Uterus (tissue), 4 donors: ENCODE measurements at regions of chr2 and their contacts with region 1.

Region 1: DNA sequence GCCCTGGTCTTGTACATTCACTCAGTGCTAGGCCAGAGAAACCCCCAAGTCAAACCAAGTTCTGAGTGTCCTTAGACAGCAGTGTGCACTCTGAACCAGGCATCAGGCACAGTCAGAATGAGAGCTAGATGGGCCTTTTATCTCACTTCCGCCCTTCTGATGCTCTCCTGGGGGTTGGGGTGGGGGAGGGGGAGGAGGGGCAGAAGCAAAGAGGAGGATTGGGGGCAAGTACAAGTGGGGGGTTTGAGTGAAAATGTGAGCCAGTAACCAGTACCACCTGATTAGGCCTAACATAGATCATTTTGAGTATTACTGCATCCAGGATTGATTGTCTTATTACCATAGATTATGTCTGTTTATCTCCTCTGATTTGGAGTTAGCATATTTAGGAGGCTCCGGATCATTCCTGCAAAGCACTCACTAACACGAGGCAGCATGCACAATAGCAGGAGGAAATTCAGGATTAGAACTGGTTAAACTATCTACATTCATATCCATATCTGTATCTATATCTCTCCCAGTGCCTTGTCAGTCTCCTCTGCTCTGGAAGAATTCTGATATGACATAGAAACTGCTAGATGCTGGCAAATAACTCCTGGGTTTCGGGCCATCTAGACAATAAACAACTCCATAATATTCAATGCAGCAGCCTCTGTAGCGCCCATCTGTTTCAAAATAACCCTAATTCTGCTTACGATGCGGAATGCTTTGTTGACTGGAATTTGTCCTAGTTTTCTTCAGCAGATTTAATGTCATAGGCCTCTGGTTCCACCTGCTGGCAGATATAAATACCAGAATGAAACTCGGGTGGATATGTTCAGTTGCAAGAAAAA is 149.1 kb downstream of the RHBDD1 start:
- DNase-seq: peak; percentile 44 to 72
- H3K4me3 ChIP-seq: no peak overlapping the region
- H3K27ac ChIP-seq: peak overlapping the region; percentile 60 to 80
- H3K4me1 ChIP-seq: peaks cover 0 to 10% of the 10 kb centered on the region in 2 donors
- H3K27me3 ChIP-seq: no peaks in the 10 kb centered on the region
- CTCF ChIP-seq: peak; percentile 73 to 90 (median 76)
- POLR2A ChIP-seq: no peak

Region 2: GRCh38 chr2:225670111-225670974 is 1314.6 kb before region 1 on chr2:
- intact Hi-C with region 1: loop called (anchors 10 kb)
- DNase-seq: no peak
- H3K4me3 ChIP-seq: no peak overlapping the region
- H3K27ac ChIP-seq: peak overlapping the region in 1 of 2 donors; percentile 39
- H3K4me1 ChIP-seq: no peaks in the 10 kb centered on the region
- H3K27me3 ChIP-seq: no peaks in the 10 kb centered on the region
- CTCF ChIP-seq: peak; percentile 27 to 54 (median 43)
- POLR2A ChIP-seq: no peak

Region 3: GRCh38 chr2:226813148-226813701 is 171.7 kb before region 1 on chr2:
- intact Hi-C with region 1: loop called (anchors 10 kb)
- DNase-seq: no peak
- H3K4me3 ChIP-seq: no peak overlapping the region
- H3K27ac ChIP-seq: no peak overlapping the region
- H3K4me1 ChIP-seq: no peaks in the 10 kb centered on the region
- H3K27me3 ChIP-seq: no peaks in the 10 kb centered on the region
- CTCF ChIP-seq: no peak
- POLR2A ChIP-seq: no peak

Region 4: DNA sequence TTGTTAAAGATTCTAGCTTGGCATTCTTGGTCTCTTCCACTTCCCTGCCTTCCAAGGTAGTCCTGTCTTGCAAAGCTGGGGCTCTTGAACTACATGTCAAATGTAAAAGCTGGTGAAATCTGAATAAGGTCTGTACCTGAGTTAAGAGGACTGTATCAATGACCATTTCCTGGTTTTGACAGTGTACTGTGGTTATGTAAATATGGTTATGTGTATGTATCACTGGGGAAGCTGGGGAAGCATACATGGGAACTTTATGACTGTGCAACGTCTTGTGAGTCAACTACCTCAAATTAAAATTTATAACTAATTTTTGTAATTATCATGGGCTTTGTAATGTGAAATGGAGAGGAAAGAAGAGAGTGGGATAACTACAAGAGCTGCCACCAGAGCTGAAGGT is 97.3 kb after region 1 on chr2:
- intact Hi-C with region 1: no loop called
- DNase-seq: no peak
- H3K4me3 ChIP-seq: no peak overlapping the region
- H3K27ac ChIP-seq: no peak overlapping the region
- H3K4me1 ChIP-seq: no peaks in the 10 kb centered on the region
- H3K27me3 ChIP-seq: no peaks in the 10 kb centered on the region
- CTCF ChIP-seq: no peak
- POLR2A ChIP-seq: no peak

Region 5: GRCh38 chr2:228433721-228434120 is 1448.8 kb after region 1 on chr2:
- intact Hi-C with region 1: no loop called
- DNase-seq: no peak
- H3K4me3 ChIP-seq: no peak overlapping the region
- H3K27ac ChIP-seq: no peak overlapping the region
- H3K4me1 ChIP-seq: no peaks in the 10 kb centered on the region
- H3K27me3 ChIP-seq: no peaks in the 10 kb centered on the region
- CTCF ChIP-seq: no peak
- POLR2A ChIP-seq: no peak